ENCODE measurements at regions of chr6 and their contacts with region 1.

Region 1: GRCh38 chr6:133916650-133917151 is 27.8 kb downstream of the TCF21 start:
- DNase-seq: peak; percentile 43 to 80 (median 62)
- ATAC-seq: peak; percentile 60
- H3K4me3 ChIP-seq: no peak overlapping the region
- H3K4me3 Mint-ChIP-seq: no peak overlapping the region
- H3K27ac ChIP-seq: no peak overlapping the region
- H3K27ac Mint-ChIP-seq: no peak overlapping the region
- H3K4me1 ChIP-seq: peaks cover 4% of the 10 kb centered on the region
- H3K4me1 Mint-ChIP-seq: no peaks in the 10 kb centered on the region
- H3K27me3 ChIP-seq: peaks cover 0 to 22% of the 10 kb centered on the region in 2 experiments
- H3K27me3 Mint-ChIP-seq: peaks cover 44% of the 10 kb centered on the region
- CTCF ChIP-seq: peak; percentile 89

Region 2: DNA sequence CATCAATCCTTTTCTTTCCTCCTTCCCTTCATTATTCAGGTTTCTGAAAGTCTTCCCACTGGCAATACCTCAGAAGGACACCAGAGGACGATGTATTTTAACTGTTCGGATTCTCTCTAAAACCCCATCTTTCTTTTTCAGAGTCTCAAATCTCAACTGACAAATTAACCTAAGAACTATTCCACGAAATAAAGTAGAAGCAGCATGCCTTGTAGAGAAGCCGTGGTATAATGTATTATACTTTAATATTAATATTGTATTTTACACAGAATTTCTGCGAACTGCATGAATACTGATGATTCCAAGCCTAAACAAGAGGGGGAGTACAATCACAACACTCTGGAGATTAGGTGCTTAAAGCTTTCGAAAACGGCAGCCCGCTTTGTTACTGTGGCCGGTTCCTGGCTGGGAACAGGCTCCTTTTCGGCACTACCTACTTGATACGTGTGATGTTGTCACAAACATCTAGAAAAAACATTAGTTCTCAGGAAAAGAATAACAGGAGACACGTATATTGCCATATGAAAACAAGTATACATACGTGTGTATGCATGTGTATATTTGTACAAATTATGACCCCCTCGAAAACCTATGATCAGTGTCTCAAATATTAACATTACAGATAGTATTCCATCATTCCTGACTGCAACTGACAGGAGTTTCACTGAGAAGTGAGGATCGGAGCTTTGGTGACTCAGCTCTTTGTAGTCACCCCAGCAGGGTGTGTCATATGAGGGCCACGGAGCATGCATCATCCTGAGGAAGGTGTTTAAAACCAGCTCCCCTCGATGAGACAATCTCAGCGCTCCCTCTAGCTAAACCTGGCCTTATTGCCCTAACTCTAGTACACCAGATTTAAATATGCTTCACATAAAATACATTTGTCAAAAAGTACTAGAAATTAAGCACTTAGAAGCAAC is 347.5 kb before region 1 on chr6:
- CTCF ChIA-PET with region 1: interaction called, 3 read pairs
- POLR2A ChIA-PET with region 1: no interaction called
- intact Hi-C with region 1: loop called (anchors 1 to 2 kb)
- DNase-seq: peak in 5 of 14 experiments; percentile 3 to 23 (median 7)
- ATAC-seq: peak; percentile 73
- H3K4me3 ChIP-seq: peak overlapping the region; percentile 22
- H3K4me3 Mint-ChIP-seq: peak overlapping the region; percentile 86
- H3K27ac ChIP-seq: no peak overlapping the region
- H3K27ac Mint-ChIP-seq: no peak overlapping the region
- H3K4me1 ChIP-seq: no peaks in the 10 kb centered on the region
- H3K4me1 Mint-ChIP-seq: peaks cover 11% of the 10 kb centered on the region
- H3K27me3 ChIP-seq: peaks cover 0 to 14% of the 10 kb centered on the region in 2 experiments
- H3K27me3 Mint-ChIP-seq: peaks cover 69% of the 10 kb centered on the region
- CTCF ChIP-seq: peak; percentile 77

Region 3: DNA sequence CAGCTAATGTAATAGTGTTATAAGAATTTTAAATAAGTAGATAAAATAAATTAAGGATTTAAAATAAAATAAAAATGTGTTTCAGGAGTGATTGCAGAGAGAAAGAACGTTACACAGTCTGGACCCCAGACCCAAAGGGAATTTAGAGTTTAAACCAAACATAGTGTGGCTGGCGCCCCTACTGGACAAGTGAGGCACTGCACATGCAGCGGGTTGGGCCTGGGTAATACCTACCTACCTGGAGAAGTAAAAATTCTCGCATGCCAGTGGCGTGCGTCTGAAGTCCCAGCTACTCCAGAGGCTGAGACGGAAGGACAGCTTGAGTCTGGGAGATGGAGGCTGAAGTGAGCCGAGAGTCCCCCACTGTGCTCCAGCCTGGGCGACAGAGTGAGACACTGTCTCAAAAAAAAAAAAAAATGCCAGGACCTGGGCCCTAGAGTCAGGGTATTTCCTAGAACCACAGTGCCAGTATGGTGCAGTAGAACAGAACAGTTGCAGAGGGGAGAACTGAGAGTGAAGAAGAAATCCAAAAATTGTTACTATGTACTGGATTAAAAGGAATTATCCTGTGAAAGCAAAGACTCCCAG is 99.1 kb before region 1 on chr6:
- CTCF ChIA-PET with region 1: no interaction called
- POLR2A ChIA-PET with region 1: no interaction called
- intact Hi-C with region 1: loop called in 1 of 2 experiments (anchors 5 kb)
- DNase-seq: peak; percentile 3 to 42 (median 14)
- ATAC-seq: no peak
- H3K4me3 ChIP-seq: no peak overlapping the region
- H3K4me3 Mint-ChIP-seq: no peak overlapping the region
- H3K27ac ChIP-seq: no peak overlapping the region
- H3K27ac Mint-ChIP-seq: no peak overlapping the region
- H3K4me1 ChIP-seq: no peaks in the 10 kb centered on the region
- H3K4me1 Mint-ChIP-seq: no peaks in the 10 kb centered on the region
- H3K27me3 ChIP-seq: no peaks in the 10 kb centered on the region
- H3K27me3 Mint-ChIP-seq: peaks cover 21% of the 10 kb centered on the region
- CTCF ChIP-seq: peak; percentile 71

Region 4: DNA sequence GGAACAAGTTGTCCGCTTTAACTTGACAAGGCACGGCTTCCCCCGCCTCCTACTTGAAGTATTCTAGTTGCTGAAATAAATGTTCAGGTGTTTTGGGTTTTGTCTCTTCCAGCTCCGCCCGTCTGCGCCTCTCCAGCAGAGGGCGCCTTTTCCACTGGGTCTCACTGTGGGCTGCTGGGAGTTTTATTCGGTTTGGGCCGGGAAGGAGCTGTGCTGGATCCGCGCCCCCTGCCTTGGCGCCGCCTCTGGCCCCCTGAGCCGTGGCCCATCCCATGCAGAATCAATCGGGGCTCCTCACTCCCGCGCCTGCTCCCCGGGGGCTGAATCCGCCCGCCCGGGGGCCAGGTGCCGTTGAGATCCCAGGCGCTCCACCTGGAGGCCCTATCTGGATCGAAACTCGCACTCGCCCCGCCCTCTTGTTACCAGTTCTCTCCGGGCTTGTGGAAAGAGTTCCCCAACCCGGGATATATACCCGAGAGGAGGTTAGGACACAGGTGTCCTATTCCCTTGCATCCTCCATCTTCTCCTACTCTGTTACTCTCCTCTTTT is 78.8 kb before region 1 on chr6:
- CTCF ChIA-PET with region 1: interaction called, 5 read pairs
- POLR2A ChIA-PET with region 1: no interaction called
- intact Hi-C with region 1: loop called (anchors 2 to 5 kb)
- DNase-seq: peak; percentile 18 to 72 (median 41)
- ATAC-seq: peak; percentile 68
- H3K4me3 ChIP-seq: peak overlapping the region; percentile 50
- H3K4me3 Mint-ChIP-seq: peak overlapping the region; percentile 44
- H3K27ac ChIP-seq: no peak overlapping the region
- H3K27ac Mint-ChIP-seq: no peak overlapping the region
- H3K4me1 ChIP-seq: peaks cover 4% of the 10 kb centered on the region
- H3K4me1 Mint-ChIP-seq: no peaks in the 10 kb centered on the region
- H3K27me3 ChIP-seq: peaks cover 4 to 11% of the 10 kb centered on the region in 2 experiments
- H3K27me3 Mint-ChIP-seq: peaks cover 62% of the 10 kb centered on the region
- CTCF ChIP-seq: peak; percentile 65

Region 5: GRCh38 chr6:135088818-135089809 is 1172.4 kb after region 1 on chr6:
- CTCF ChIA-PET with region 1: no interaction called
- POLR2A ChIA-PET with region 1: no interaction called
- intact Hi-C with region 1: no loop called
- DNase-seq: peak in 4 of 14 experiments; percentile 50 to 72 (median 64)
- ATAC-seq: peak; percentile 60
- H3K4me3 ChIP-seq: peak overlapping the region; percentile 38
- H3K4me3 Mint-ChIP-seq: peak overlapping the region; percentile 78
- H3K27ac ChIP-seq: peak overlapping the region in 1 of 2 donors; percentile 14
- H3K27ac Mint-ChIP-seq: peak overlapping the region; percentile 94
- H3K4me1 ChIP-seq: peaks cover 44% of the 10 kb centered on the region
- H3K4me1 Mint-ChIP-seq: peaks cover 86% of the 10 kb centered on the region
- H3K27me3 ChIP-seq: no peaks in the 10 kb centered on the region
- H3K27me3 Mint-ChIP-seq: no peaks in the 10 kb centered on the region
- CTCF ChIP-seq: peak; percentile 62